Ovary (tissue), 10 donors: ENCODE measurements at regions of chr6 and their contacts with region 1.

Region 1: GRCh38 chr6:70955441-70956190 is 1.2 kb downstream of the B3GAT2 start:
- DNase-seq: peak; percentile 60 to 84 (median 70)
- H3K4me3 ChIP-seq: peak overlapping the region; percentile 40
- H3K27ac ChIP-seq: no peak overlapping the region
- H3K4me1 ChIP-seq: peaks cover 10% of the 10 kb centered on the region
- H3K27me3 ChIP-seq: no peaks in the 10 kb centered on the region
- CTCF ChIP-seq: peak; percentile 43 to 59 (median 51)
- EP300 ChIP-seq: no peak
- POLR2A ChIP-seq: no peak

Region 2: DNA sequence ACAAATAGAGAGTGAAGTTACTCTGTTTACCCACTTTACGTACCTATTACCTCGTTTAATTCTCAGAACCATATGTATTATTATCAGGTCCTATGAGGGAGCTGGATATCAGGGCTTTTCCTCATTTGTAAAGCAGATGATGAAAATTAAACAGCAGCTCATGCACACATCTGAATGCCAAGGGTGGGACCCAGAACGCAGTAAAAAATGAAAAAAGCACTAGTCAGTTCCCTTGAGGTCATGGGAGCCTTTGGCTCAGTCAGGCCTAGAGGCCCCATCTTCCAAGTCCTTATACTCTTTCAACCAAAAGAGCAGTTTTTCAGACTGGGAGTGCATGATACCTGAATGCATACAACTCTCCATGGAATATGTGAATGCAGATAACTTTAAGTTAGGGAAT is 21.8 kb before region 1 on chr6:
- intact Hi-C with region 1: loop called in 1 of 4 experiments (anchors 2 kb)
- DNase-seq: no peak
- H3K4me3 ChIP-seq: no peak overlapping the region
- H3K27ac ChIP-seq: no peak overlapping the region
- H3K4me1 ChIP-seq: no peaks in the 10 kb centered on the region
- H3K27me3 ChIP-seq: no peaks in the 10 kb centered on the region
- CTCF ChIP-seq: no peak
- EP300 ChIP-seq: no peak
- POLR2A ChIP-seq: no peak